Activated CD4-positive, alpha-beta T cell treated with anti-CD3 and anti-CD28 coated beads for 36 hours (primary cell): ENCODE measurements at regions of chr15 and their contacts with region 1.

Region 1: DNA sequence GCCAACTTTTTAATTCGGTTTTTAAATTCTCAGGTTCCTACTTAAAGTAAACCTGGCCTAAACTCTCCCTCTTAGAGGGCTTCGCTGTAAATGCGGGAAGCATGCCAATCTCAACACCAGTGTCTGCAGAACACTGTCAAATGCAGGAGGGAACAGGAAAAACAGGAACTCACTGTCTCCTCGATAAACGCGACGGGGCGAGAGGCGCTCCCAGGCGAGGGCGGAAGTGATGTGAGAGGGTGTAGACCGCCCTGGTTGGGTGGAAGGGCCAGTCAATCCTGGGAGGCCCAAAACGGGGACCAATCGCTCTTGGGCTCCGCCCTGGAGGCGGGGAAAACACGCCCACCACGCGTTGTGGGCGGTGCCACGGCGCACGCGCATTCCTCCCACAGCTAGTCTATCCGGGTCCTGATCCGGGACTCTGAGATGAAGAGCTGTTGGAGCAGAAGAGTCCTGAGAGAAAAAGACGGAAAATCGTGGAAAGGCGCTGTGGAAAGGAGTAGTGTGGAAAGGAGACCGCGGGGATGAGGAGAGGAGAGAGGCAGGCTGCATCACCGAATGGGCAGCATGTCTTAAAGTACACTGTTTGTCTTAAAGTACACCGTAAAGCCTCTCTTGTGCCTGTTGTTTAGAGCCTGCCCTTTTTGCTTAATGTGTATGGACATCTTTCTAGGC is 27.1 kb downstream of the SLC28A2 start:
- DNase-seq: peak; percentile 97
- ATAC-seq: peak; percentile 100
- H3K4me3 Mint-ChIP-seq: peak overlapping the region; percentile 83
- H3K27ac Mint-ChIP-seq: peak overlapping the region; percentile 83
- H3K4me1 Mint-ChIP-seq: peaks cover 18% of the 10 kb centered on the region
- H3K27me3 Mint-ChIP-seq: peaks cover 1% of the 10 kb centered on the region

Region 2: GRCh38 chr15:45022871-45023658 is 256.1 kb before region 1 on chr15 and contains the start of gene SORD:
- CTCF ChIA-PET with region 1: no interaction called
- POLR2A ChIA-PET with region 1: no interaction called
- intact Hi-C with region 1: loop called in 1 of 2 experiments (anchors 1 kb)
- DNase-seq: peak; percentile 96
- ATAC-seq: peak; percentile 99
- H3K4me3 Mint-ChIP-seq: peak within 1 kb of the TSS; percentile 83
- H3K27ac Mint-ChIP-seq: peak within 1 kb of the TSS; percentile 74
- H3K4me1 Mint-ChIP-seq: peaks cover 23% of the 10 kb centered on the region
- H3K27me3 Mint-ChIP-seq: peaks cover 16% of the 10 kb centered on the region
- total RNA-seq, gene SORD: 17.1 to 17.7 TPM

Region 3: GRCh38 chr15:45166834-45167630 is 112.1 kb before region 1 on chr15:
- CTCF ChIA-PET with region 1: interaction called, 3 read pairs
- POLR2A ChIA-PET with region 1: no interaction called
- intact Hi-C with region 1: loop called in 1 of 2 experiments (anchors 1 kb)
- DNase-seq: peak; percentile 91
- ATAC-seq: peak; percentile 93
- H3K4me3 Mint-ChIP-seq: peak overlapping the region; percentile 69
- H3K27ac Mint-ChIP-seq: peak overlapping the region; percentile 77
- H3K4me1 Mint-ChIP-seq: peaks cover 9% of the 10 kb centered on the region
- H3K27me3 Mint-ChIP-seq: no peaks in the 10 kb centered on the region

Region 4: GRCh38 chr15:45205192-45205591 is 74.0 kb before region 1 on chr15:
- CTCF ChIA-PET with region 1: interaction called, 7 read pairs
- POLR2A ChIA-PET with region 1: no interaction called
- intact Hi-C with region 1: loop called (anchors 1 kb)
- DNase-seq: peak; percentile 86
- ATAC-seq: peak; percentile 63
- H3K4me3 Mint-ChIP-seq: no peak overlapping the region
- H3K27ac Mint-ChIP-seq: no peak overlapping the region
- H3K4me1 Mint-ChIP-seq: peaks cover 7% of the 10 kb centered on the region
- H3K27me3 Mint-ChIP-seq: peaks cover 2% of the 10 kb centered on the region

Region 5: GRCh38 chr15:45225506-45226273 is 53.5 kb before region 1 on chr15:
- CTCF ChIA-PET with region 1: no interaction called
- POLR2A ChIA-PET with region 1: no interaction called
- intact Hi-C with region 1: no loop called
- DNase-seq: peak; percentile 19
- ATAC-seq: no peak
- H3K4me3 Mint-ChIP-seq: no peak overlapping the region
- H3K27ac Mint-ChIP-seq: no peak overlapping the region
- H3K4me1 Mint-ChIP-seq: no peaks in the 10 kb centered on the region
- H3K27me3 Mint-ChIP-seq: peaks cover 6% of the 10 kb centered on the region

Region 6: DNA sequence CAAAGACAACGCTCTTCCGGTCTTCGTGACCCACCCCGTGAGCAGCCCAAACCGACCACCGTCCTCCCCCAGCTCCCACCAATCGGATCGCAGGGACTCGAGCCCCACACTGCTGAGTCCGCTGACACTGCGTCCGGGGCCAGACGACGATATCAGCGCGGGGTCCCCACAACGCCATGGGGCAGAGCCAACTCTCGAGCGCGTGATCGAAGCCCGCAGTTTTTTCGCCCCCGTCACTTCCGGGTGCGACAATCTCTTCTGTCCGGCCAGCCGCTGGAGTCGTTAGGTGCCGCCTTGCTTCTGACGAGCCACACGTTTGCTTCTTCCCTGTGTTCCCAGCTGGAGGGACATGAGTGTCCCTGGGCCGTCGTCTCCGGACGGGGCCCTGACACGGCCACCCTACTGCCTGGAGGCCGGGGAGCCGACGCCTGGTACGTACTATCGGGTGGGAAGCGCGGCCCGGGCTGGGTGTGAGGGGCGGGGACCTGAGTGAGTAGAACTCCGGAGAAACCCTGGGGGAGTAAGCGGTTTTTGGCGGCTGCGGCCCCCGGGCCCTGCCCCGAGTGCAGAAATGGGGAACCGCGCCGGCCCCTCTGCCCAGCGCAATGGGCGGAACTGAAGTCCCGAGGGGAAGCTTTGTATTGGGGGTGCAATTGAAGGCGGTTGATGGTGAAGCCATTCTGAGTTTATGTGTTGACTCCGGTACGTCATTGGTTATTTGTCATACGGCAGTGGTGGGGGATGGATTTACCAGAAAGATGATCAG is 308.1 kb after region 1 on chr15 and contains the start of gene BLOC1S6:
- CTCF ChIA-PET with region 1: no interaction called
- POLR2A ChIA-PET with region 1: no interaction called
- intact Hi-C with region 1: loop called in 1 of 2 experiments (anchors 1 kb)
- DNase-seq: peak; percentile 91
- ATAC-seq: peak; percentile 81
- H3K4me3 Mint-ChIP-seq: peak within 1 kb of the TSS; percentile 94
- H3K27ac Mint-ChIP-seq: peak within 1 kb of the TSS; percentile 100
- H3K4me1 Mint-ChIP-seq: peaks cover 48% of the 10 kb centered on the region
- H3K27me3 Mint-ChIP-seq: no peaks in the 10 kb centered on the region
- total RNA-seq, gene BLOC1S6: 36.1 to 52.5 TPM